Breast epithelium (tissue), 4 donors: ENCODE measurements at regions of chr9 and their contacts with region 1.

Region 1: DNA sequence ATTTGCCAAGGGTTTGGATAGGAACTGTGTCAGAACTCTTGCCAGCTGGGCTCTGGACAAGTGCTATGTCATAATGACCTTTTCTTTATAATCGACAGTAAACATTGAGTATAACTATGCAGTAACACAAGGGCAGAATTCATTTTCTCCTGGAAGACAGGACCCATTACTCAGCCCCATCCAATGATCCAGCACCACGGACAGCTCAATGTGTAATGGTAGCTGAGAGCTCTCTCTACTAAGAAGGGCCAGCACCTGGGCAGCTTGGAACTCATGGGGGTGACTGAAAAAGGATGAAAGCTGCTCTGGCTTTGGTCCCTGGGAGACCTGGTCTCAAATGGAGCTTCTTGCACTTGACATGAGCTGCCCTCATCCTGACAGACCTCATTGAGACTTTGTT is 347.8 kb downstream of the TRIM32 start:
- DNase-seq: no peak
- H3K4me3 ChIP-seq: no peak overlapping the region
- H3K27ac ChIP-seq: no peak overlapping the region
- H3K4me1 ChIP-seq: no peaks in the 10 kb centered on the region
- H3K27me3 ChIP-seq: no peaks in the 10 kb centered on the region
- CTCF ChIP-seq: no peak
- POLR2A ChIP-seq: no peak

Region 2: GRCh38 chr9:116693201-116693731 is 341.6 kb before region 1 on chr9:
- intact Hi-C with region 1: no loop called
- DNase-seq: no peak
- H3K4me3 ChIP-seq: no peak overlapping the region
- H3K27ac ChIP-seq: no peak overlapping the region
- H3K4me1 ChIP-seq: peaks cover 0 to 1% of the 10 kb centered on the region in 2 donors
- H3K27me3 ChIP-seq: no peaks in the 10 kb centered on the region
- CTCF ChIP-seq: no peak
- POLR2A ChIP-seq: no peak

Region 3: GRCh38 chr9:117224695-117225094 is 189.8 kb after region 1 on chr9:
- intact Hi-C with region 1: loop called (anchors 5 kb)
- DNase-seq: no peak
- H3K4me3 ChIP-seq: no peak overlapping the region
- H3K27ac ChIP-seq: no peak overlapping the region
- H3K4me1 ChIP-seq: no peaks in the 10 kb centered on the region
- H3K27me3 ChIP-seq: no peaks in the 10 kb centered on the region
- CTCF ChIP-seq: no peak
- POLR2A ChIP-seq: no peak